ENCODE measurements at regions of chr9 and their contacts with region 1.

Region 1: GRCh38 chr9:122991370-122991830 is 42.1 kb upstream of the GPR21 start:
- DNase-seq: peak; percentile 66
- ATAC-seq: peak; percentile 70
- H3K4me3 ChIP-seq: no peak overlapping the region
- H3K27ac ChIP-seq: no peak overlapping the region
- H3K4me1 ChIP-seq: no peaks in the 10 kb centered on the region
- H3K27me3 ChIP-seq: no peaks in the 10 kb centered on the region
- CTCF ChIP-seq: peak; percentile 65

Region 2: DNA sequence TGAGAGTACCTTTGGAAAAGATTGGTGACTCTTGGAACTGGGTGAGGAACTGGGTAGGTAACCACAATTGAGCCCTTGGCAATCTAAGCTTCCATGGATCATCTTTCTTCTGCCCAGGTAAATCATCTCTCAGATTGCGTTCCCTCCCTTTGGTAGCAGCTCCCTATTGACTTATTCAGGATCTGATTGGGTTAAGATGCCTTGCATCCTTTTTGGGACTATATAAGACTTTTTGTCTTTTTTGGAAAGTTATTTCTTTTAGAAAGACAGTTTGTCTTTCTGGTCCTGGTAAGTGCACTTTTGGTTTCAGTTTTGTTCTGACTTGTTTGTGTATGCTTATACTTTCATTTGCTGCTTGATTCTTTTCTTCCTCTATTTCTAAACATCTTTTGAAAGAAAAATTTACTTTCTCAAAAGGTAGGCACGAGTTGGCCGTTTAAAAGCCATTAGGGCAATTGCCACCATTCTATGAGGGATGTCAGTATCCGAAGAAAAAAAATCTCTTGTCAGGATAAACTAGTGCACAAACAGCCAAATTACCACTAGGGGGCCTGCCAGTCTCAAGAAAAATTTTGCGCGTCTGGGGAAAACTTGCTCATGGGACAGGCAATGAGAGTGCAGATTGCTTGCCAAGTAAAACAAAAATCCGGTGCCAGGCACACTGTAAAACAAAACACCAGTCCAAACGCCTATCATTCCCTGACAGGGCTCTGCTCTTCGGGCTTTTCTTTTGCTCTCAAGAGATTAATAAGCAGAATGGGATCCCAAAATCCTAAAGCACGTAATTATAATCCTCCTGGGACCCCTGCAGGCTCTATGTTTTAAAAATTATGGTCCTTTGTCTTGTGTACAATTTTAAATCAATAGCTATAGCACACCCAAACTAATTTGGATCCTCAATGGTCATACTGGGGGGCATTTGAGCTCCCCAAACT is 526.5 kb before region 1 on chr9:
- CTCF ChIA-PET with region 1: no interaction called
- POLR2A ChIA-PET with region 1: no interaction called
- intact Hi-C with region 1: loop called (anchors 10 kb)
- DNase-seq: peak; percentile 84
- ATAC-seq: peak; percentile 84
- H3K4me3 ChIP-seq: peak overlapping the region; percentile 73
- H3K27ac ChIP-seq: no peak overlapping the region
- H3K4me1 ChIP-seq: peaks cover 8% of the 10 kb centered on the region; the same call in 1 of the 2 replicates
- H3K27me3 ChIP-seq: peaks cover 4% of the 10 kb centered on the region; the same call in 1 of the 2 replicates
- CTCF ChIP-seq: peak; percentile 79

Region 3: GRCh38 chr9:122912964-122913673 is 78.3 kb before region 1 on chr9 and contains the start of gene ZBTB6:
- CTCF ChIA-PET with region 1: interaction called, 6 read pairs
- POLR2A ChIA-PET with region 1: no interaction called
- intact Hi-C with region 1: loop called (anchors 5 kb)
- DNase-seq: peak; percentile 81
- ATAC-seq: peak; percentile 99
- H3K4me3 ChIP-seq: peak within 1 kb of the TSS; percentile 98
- H3K27ac ChIP-seq: peak within 1 kb of the TSS; percentile 80
- H3K4me1 ChIP-seq: peaks cover 10% of the 10 kb centered on the region; the same call in 1 of the 2 replicates
- H3K27me3 ChIP-seq: no peaks in the 10 kb centered on the region
- CTCF ChIP-seq: no peak
- total RNA-seq, gene ZBTB6: 4.4 and 4.7 TPM in 2 replicates

Region 4: DNA sequence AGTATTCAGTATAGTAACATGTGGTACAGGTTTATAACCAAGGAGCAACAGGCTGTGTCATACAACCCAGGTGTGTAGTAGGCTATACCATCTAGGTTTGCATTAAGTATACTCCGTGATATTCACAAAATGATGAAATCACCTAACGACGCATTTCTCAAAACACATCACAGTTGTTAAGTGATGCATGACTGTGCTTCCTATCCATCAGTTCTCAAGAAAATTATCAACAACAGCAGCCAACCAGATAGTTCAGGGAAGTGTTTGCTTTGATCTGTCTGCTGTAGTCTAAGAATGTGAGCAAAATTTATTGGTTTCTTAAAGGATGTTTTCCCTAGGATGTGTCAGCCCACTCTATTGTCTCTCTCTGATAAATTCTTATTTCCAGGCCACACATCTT is 67.5 kb before region 1 on chr9:
- CTCF ChIA-PET with region 1: interaction called, 10 read pairs
- POLR2A ChIA-PET with region 1: no interaction called
- intact Hi-C with region 1: no loop called
- DNase-seq: no peak
- ATAC-seq: no peak
- H3K4me3 ChIP-seq: no peak overlapping the region
- H3K27ac ChIP-seq: no peak overlapping the region
- H3K4me1 ChIP-seq: peaks cover 4% of the 10 kb centered on the region
- H3K27me3 ChIP-seq: no peaks in the 10 kb centered on the region
- CTCF ChIP-seq: no peak

Region 5: DNA sequence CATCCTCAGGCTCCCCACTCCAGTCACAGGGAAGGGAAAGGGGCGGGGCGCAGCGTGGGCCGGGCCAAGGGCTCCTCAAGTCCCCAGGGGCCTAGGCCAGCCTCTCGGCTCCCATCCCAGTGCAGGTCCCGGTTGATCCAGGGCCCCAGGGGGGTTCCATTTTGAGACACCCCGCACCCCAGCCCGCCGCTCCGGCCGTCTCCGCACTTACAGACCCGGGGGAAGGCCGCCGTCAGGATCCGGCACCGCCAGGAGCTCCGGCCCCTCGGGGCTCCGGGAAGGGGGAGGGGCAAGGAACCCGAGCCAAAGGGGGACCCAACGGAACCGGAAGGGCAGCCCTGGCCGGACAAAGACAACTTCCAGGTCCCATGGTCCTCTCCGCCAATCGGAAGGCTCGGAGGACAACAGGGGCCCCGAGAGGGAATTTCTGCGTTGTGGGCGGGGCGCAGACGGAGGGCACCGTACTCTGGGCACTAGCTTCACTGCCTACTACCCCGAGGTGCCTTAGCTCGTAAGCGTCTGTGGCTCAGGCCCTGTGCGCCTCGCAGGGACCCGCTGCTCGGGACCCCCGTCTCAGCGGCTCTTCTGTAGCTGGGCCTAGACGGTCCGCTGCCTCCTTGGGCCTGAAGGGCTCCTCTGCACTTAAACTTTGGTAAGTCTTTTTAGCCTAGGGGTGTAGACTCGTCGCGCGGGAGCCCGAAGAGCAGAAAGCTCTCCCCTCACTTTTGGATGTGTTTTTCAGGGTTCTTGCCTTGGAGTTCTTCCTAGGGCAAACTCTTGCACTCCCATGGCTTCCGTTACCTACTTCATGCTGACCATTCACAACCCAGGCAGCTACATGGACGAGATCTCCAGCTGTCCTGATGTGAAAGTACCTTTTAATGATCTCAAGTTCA is 59.9 kb before region 1 on chr9 and contains the start of gene ZBTB26:
- CTCF ChIA-PET with region 1: no interaction called
- POLR2A ChIA-PET with region 1: no interaction called
- intact Hi-C with region 1: loop called (anchors 5 kb)
- DNase-seq: peak; percentile 88
- ATAC-seq: peak; percentile 96
- H3K4me3 ChIP-seq: peak within 1 kb of the TSS; percentile 81
- H3K27ac ChIP-seq: peak within 1 kb of the TSS; percentile 49
- H3K4me1 ChIP-seq: peaks cover 23% of the 10 kb centered on the region
- H3K27me3 ChIP-seq: no peaks in the 10 kb centered on the region
- CTCF ChIP-seq: no peak
- total RNA-seq, gene ZBTB26: 1.5 and 1.6 TPM in 2 replicates

Measured in PC-3 (cell line).